Caco-2 (cell line): ENCODE measurements at regions of chr22 and their contacts with region 1.

Region 1: DNA sequence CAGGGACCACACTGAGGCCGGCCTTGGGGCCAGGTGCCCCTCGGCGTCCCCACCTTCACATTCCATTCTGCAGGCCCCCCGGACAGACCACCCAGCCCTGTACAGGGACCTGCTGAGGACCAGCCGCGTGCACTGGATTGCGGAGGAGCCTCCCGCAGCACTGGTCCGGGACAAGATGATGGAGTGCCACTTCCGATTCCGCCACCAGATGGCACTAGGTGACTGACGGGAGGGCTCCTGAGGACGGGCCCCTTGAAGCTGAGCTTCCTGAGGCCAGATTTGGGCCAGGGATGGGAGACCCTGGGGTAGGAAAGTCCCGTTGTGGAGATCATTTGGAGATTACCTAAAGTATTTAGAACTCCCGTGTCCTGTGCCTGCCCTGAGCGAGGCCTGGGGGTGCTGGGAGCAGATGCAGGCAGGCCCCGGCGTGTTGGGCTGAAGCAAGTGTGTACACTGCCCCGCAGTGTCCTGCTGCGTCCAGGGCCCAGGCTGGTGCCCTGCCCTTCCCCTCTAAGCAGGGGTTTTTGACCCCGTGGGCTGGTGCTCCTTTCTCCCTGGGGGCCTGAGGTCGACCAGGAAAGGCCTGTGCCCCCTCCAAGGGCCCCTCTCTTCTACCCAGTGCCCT is 20.0 kb downstream of the TRMU start:
- DNase-seq: peak; percentile 75 to 83
- H3K4me3 ChIP-seq: no peak overlapping the region
- H3K4me3 Mint-ChIP-seq: no peak overlapping the region
- H3K27ac Mint-ChIP-seq: peak overlapping the region; percentile 57
- H3K4me1 ChIP-seq: no peaks in the 10 kb centered on the region
- H3K4me1 Mint-ChIP-seq: no peaks in the 10 kb centered on the region
- H3K27me3 ChIP-seq: no peaks in the 10 kb centered on the region
- H3K27me3 Mint-ChIP-seq: no peaks in the 10 kb centered on the region
- CTCF ChIP-seq: peak; percentile 82 to 85

Region 2: DNA sequence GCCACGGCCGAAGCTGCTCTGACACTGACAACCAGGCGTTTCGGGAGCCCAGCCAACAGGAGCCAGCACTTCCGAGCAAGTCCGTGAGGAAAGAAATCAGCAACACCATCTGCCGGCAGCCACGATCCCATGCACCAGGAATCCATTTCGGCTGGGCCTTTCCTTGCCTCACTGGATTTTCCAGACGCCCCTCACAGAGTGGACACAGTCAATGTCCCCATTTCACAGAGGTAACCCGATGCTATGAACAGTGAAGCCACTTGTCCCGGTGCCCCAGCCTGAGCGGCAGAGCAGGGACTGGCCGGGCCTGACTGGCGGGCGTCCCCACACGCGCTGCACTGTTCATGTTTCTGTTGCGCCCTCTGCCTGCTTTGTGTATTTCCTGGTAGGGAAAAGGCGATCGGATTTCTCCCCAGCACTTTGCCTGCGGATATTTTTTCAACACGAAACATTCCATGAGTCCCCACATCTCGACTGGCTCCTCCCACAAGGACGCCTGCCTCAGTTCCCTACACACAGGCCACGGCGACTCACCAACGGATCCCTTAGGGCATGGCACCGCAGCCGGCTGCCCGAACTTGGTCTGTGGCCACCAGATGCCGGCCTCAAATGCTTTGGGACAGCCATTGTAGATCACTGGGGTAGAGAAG is 35.3 kb after region 1 on chr22:
- CTCF ChIA-PET with region 1: no interaction called
- POLR2A ChIA-PET with region 1: no interaction called
- intact Hi-C with region 1: loop called (anchors 5 kb)
- DNase-seq: peak in 1 of 2 experiments; percentile 39
- H3K4me3 ChIP-seq: no peak overlapping the region
- H3K4me3 Mint-ChIP-seq: no peak overlapping the region
- H3K27ac Mint-ChIP-seq: peak overlapping the region; percentile 76
- H3K4me1 ChIP-seq: no peaks in the 10 kb centered on the region
- H3K4me1 Mint-ChIP-seq: no peaks in the 10 kb centered on the region
- H3K27me3 ChIP-seq: no peaks in the 10 kb centered on the region
- H3K27me3 Mint-ChIP-seq: no peaks in the 10 kb centered on the region
- CTCF ChIP-seq: peak in 1 of 2 experiments; percentile 16